Sciatic nerve (tissue), 2 donors: ENCODE measurements at regions of chr2 and their contacts with region 1.

Region 1: DNA sequence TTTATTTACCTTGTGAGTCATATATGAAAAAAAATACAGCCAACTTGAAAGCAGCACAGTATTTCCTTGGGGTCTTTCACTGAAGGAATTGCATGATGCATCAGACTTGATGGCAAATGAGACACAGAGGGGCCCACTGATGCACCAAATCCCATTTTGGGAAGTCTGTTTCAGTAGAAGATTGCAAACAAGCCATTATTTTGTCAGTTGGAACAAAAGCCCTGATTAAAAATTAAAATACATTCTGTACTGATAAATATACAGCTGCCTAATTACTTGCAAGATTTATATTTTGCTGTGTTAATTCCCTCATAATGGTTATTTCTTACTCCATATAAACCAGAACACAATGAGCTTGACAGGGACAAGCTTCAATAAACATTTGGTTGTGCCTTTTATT is 370.4 kb downstream of the SUCLG1 start:
- DNase-seq: no peak
- ATAC-seq: no peak

Region 2: GRCh38 chr2:84077492-84077891 is 11.2 kb before region 1 on chr2:
- intact Hi-C with region 1: loop called (anchors 1 kb)
- DNase-seq: no peak
- ATAC-seq: no peak

Region 3: DNA sequence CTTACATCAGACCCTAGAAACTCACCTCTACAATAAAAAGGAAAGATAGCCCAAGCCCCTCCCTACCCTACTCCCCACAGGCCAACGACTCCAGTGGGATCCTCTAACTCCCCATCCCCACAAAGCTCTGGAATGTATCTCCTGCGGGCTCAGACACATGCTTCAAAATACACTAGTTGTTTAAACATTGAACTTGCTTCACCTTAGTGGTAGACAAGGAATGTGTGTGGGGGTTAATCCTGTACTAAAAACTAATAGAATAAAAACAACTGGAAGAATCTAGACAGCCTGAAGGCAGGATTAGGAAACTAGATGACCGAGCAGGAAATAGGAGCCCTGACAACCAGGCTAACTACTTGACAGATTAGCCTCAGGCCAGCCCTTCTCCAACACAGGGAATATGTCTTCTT is 158.9 kb after region 1 on chr2:
- intact Hi-C with region 1: no loop called
- DNase-seq: no peak
- ATAC-seq: no peak